Dendritic cell treated with granulocyte-macrophage colony-stimulating factor and Interleukin-4, amounts not matched to agents 40 ng/mL and 50 ng/mL, for 4 days (primary cell): ENCODE measurements at regions of chr1 and their contacts with region 1.

Region 1: GRCh38 chr1:145985502-145986439 is 10.6 kb downstream of the TXNIP start:
- H3K4me3 Mint-ChIP-seq: peak overlapping the region; percentile 85
- H3K27ac Mint-ChIP-seq: peak overlapping the region; percentile 95
- H3K4me1 Mint-ChIP-seq: peaks cover 48% of the 10 kb centered on the region
- H3K27me3 Mint-ChIP-seq: no peaks in the 10 kb centered on the region

Region 2: DNA sequence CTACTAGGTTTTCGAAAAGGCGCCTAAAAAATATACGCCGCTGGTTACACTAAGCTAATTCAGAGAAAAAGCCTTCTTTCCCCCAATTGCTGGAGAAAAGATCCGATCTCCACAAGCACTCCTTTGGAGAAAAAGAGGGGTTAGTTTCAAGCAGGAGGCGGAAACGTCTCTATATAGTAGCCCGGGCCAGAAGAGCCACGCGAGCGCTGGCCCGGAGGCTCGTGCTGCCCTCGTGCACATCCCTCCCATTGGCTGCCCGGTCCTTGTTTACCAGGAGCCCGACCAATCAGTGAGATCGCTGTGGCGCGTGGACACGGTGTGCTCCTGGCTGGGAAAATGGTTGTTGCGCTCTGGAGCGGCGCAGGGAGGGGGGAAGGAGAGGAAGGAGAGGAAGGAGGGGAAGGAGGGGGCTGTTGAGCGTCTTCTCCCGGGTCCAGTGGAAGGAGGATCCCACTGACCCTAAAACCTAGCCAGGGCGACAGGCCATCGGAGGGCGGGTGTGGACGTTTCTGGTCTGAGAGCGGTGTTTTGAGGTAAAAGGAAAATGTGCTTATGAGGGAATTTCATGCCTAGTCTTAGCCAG is 10.8 kb after region 1 on chr1 and contains the start of gene TXNIP:
- intact Hi-C with region 1: loop called (anchors 1 kb)
- H3K4me3 Mint-ChIP-seq: peak within 1 kb of the TSS; percentile 99
- H3K27ac Mint-ChIP-seq: peak within 1 kb of the TSS; percentile 95
- H3K4me1 Mint-ChIP-seq: peaks cover 43% of the 10 kb centered on the region
- H3K27me3 Mint-ChIP-seq: no peaks in the 10 kb centered on the region